IMR-90 (cell line): ENCODE measurements at regions of chr1 and their contacts with region 1.

Region 1: DNA sequence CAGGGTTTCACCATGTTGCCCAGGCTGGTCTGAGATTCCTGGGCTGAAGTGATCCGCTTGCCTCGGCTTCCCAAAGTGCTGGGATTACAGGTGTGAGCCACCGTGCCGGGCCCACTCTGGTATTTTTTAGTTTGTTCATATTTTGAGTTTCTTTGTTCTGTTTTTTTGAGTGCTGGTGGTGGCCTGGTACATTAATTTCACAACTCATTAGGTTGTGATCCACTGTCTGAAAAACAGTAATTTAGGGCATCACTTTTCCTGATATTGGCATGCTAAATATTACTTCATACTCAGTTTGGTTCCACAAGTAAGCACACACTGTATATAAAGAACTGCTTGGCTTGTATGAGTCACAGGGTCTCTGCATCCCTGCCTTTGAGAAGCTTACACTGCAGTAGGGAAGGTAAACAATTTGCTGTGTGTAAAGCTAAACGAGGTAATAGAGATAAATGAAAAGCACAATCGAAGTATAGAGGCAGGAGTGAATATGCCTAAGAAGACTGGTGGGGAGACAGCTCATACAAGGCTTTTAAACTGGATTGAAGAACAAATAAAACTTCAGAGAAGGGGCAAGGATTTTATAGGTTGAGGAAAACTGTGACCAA is 7.7 kb downstream of the SNX27 start:
- DNase-seq: peak; percentile 88
- ATAC-seq: peak; percentile 95
- H3K4me3 ChIP-seq: no peak overlapping the region
- H3K27ac ChIP-seq: peak overlapping the region; percentile 7; the same call in 1 of the 2 replicates
- H3K4me1 ChIP-seq: peaks cover 12% of the 10 kb centered on the region
- H3K27me3 ChIP-seq: no peaks in the 10 kb centered on the region
- CTCF ChIP-seq: no peak
- POLR2A ChIP-seq: no peak
- RAD21 ChIP-seq: no peak

Region 2: DNA sequence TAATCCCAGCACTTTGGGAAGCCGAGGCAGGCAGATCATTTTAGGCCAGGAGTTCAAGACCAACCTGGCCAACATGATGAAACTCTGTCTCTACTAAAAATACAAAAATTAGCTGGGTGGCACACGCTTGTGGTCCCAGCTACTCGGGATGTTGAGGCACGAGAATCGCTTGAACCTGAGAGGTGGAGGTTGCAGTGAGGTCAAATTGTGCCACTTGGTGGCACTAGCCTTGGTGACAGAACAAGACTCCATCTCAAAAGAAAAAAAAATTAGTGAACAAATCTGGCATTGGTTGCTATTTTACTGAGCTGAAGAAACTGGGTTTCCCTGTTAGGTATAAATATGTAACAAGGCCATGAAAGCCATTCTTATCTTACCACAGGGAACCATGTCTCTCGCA is 392.0 kb before region 1 on chr1:
- CTCF ChIA-PET with region 1: no interaction called
- POLR2A ChIA-PET with region 1: no interaction called
- dilution Hi-C with region 1: no loop called
- in situ Hi-C with region 1: no loop called
- intact Hi-C with region 1: no loop called
- DNase-seq: no peak
- ATAC-seq: no peak
- H3K4me3 ChIP-seq: no peak overlapping the region
- H3K27ac ChIP-seq: no peak overlapping the region
- H3K4me1 ChIP-seq: no peaks in the 10 kb centered on the region
- H3K27me3 ChIP-seq: no peaks in the 10 kb centered on the region
- CTCF ChIP-seq: no peak
- POLR2A ChIP-seq: no peak
- RAD21 ChIP-seq: no peak

Region 3: DNA sequence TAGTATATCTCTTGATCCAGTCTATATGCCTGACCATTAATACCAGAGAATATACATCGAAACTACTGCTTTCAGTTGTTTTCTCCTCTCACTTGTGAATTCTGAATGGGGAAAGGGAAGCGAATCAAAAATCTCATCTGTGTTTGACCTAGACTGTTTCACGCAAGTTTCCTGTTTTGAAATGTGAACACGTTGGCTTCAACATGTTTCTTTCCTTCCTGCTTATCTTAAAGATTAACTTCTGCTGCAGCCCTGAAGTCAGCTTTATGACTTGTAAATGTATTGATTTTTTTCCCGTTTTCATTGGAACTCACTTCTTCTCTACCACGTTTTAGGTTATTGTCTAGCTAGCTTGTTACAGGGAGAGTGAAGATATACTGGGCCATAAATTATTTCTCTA is 42.2 kb after region 1 on chr1:
- CTCF ChIA-PET with region 1: no interaction called
- POLR2A ChIA-PET with region 1: no interaction called
- dilution Hi-C with region 1: no loop called
- in situ Hi-C with region 1: no loop called
- intact Hi-C with region 1: loop called (anchors 5 kb)
- DNase-seq: no peak
- ATAC-seq: no peak
- H3K4me3 ChIP-seq: no peak overlapping the region
- H3K27ac ChIP-seq: no peak overlapping the region
- H3K4me1 ChIP-seq: no peaks in the 10 kb centered on the region
- H3K27me3 ChIP-seq: no peaks in the 10 kb centered on the region
- CTCF ChIP-seq: no peak
- POLR2A ChIP-seq: no peak
- RAD21 ChIP-seq: no peak

Region 4: DNA sequence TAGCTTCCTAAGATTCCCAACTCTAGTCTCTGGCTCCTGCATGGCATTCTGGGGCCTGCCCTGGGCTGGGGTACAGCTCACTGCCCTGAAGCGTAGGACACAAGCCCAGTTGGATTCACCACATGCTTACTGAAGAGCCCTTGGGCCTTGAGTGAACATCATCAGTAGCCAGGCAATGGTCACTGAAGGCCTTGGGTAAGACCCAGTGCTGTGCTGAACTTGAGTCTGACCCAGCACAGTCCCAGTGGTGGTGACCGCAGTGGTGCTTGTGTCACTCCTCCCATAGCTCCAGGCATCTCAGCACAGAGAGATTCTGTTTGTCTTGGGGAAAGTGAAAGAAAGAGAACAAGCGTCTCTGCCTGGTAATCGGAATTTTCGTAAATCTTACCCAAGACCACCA is 1011.0 kb after region 1 on chr1:
- CTCF ChIA-PET with region 1: no interaction called
- POLR2A ChIA-PET with region 1: no interaction called
- dilution Hi-C with region 1: no loop called
- in situ Hi-C with region 1: no loop called
- intact Hi-C with region 1: no loop called
- DNase-seq: no peak
- ATAC-seq: no peak
- H3K4me3 ChIP-seq: no peak overlapping the region
- H3K27ac ChIP-seq: no peak overlapping the region
- H3K4me1 ChIP-seq: no peaks in the 10 kb centered on the region
- H3K27me3 ChIP-seq: no peaks in the 10 kb centered on the region
- CTCF ChIP-seq: no peak
- POLR2A ChIP-seq: no peak
- RAD21 ChIP-seq: no peak

Region 5: GRCh38 chr1:152777525-152778137 is 1158.0 kb after region 1 on chr1:
- CTCF ChIA-PET with region 1: no interaction called
- POLR2A ChIA-PET with region 1: no interaction called
- dilution Hi-C with region 1: no loop called
- in situ Hi-C with region 1: no loop called
- intact Hi-C with region 1: no loop called
- DNase-seq: no peak
- ATAC-seq: no peak
- H3K4me3 ChIP-seq: no peak overlapping the region
- H3K27ac ChIP-seq: no peak overlapping the region
- H3K4me1 ChIP-seq: no peaks in the 10 kb centered on the region
- H3K27me3 ChIP-seq: no peaks in the 10 kb centered on the region
- CTCF ChIP-seq: peak; percentile 32; the same call in 1 of the 2 replicates
- POLR2A ChIP-seq: no peak
- RAD21 ChIP-seq: no peak